HepG2 (cell line): ENCODE measurements at regions of chr13 and their contacts with region 1.

Region 1: GRCh38 chr13:36880961-36881360 is 39.1 kb downstream of the SMAD9 start:
- DNase-seq: no peak
- ATAC-seq: no peak
- H3K4me3 ChIP-seq: no peak overlapping the region
- H3K27ac ChIP-seq: peak overlapping the region; percentile 99
- H3K4me1 ChIP-seq: peaks cover 63% of the 10 kb centered on the region
- H3K27me3 ChIP-seq: no peaks in the 10 kb centered on the region
- CTCF ChIP-seq: no peak
- EP300 ChIP-seq: no peak
- POLR2A ChIP-seq: no peak
- RAD21 ChIP-seq: no peak

Region 2: GRCh38 chr13:36530050-36530789 is 350.7 kb before region 1 on chr13:
- CTCF ChIA-PET with region 1: no interaction called
- POLR2A ChIA-PET with region 1: no interaction called
- in situ Hi-C with region 1: no loop called
- intact Hi-C with region 1: no loop called
- DNase-seq: no peak
- ATAC-seq: no peak
- H3K4me3 ChIP-seq: no peak overlapping the region
- H3K27ac ChIP-seq: no peak overlapping the region
- H3K4me1 ChIP-seq: no peaks in the 10 kb centered on the region
- H3K27me3 ChIP-seq: peaks cover 0 to 1% of the 10 kb centered on the region in 2 experiments; a peak in 1 of 5 replicates
- CTCF ChIP-seq: no peak
- EP300 ChIP-seq: no peak
- POLR2A ChIP-seq: no peak
- RAD21 ChIP-seq: no peak

Region 3: DNA sequence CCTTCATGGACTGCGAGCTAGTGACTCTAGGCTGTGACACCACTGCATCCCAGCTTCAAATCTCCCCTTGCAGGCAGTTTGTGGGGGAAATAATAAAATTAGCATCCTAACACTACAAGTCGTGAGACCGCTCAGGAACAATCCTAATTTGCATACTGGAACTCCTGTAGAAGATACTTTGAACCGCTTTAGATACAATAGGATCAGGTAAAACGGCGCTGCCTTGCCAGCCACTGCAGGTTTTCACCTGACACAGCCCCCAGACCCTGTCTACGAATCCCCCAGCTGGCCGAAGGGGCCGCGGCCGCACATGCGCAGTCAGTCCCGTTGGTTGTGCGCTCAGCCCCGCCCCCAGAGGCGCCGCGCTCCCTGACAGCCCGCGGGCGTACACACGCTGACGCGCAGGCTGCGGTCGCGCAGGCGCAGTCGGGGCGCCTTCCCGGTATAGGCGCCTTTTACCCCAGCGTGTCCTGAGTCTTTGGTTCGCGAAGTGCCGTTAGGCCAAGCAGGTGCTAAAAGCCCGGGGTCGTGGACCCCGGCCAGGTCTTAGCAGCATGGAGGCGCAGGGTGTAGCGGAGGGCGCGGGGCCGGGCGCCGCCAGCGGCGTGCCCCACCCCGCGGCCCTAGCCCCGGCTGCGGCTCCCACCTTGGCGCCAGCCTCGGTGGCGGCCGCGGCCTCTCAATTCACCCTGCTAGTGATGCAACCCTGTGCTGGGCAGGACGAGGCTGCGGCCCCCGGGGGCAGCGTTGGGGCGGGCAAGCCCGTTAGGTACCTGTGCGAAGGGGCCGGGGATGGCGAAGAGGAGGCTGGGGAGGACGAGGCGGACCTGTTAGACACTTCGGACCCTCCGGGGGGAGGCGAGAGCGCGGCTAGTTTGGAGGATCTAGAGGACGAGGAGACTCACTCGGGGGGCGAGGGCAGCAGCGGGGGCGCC is 61.9 kb before region 1 on chr13 and contains the start of gene RFXAP:
- CTCF ChIA-PET with region 1: no interaction called
- POLR2A ChIA-PET with region 1: no interaction called
- in situ Hi-C with region 1: no loop called
- intact Hi-C with region 1: loop called (anchors 2 kb)
- DNase-seq: peak; percentile 74
- ATAC-seq: peak; percentile 93
- H3K4me3 ChIP-seq: peak within 1 kb of the TSS; percentile 71 to 84 (median 77)
- H3K27ac ChIP-seq: peak within 1 kb of the TSS; percentile 63
- H3K4me1 ChIP-seq: peaks cover 46% of the 10 kb centered on the region
- H3K27me3 ChIP-seq: no peaks in the 10 kb centered on the region; a peak in 1 of 5 replicates
- CTCF ChIP-seq: peak; percentile 22; the same call in 1 of the 2 replicates
- EP300 ChIP-seq: no peak
- POLR2A ChIP-seq: peak; percentile 62 to 78
- RAD21 ChIP-seq: peak; percentile 25; the same call in 1 of the 2 replicates
- total RNA-seq, gene RFXAP: 1.8 and 4.4 TPM in 2 replicates

Region 4: GRCh38 chr13:36870050-36870692 is 10.8 kb before region 1 on chr13:
- CTCF ChIA-PET with region 1: no interaction called
- POLR2A ChIA-PET with region 1: interaction called, 24 read pairs
- in situ Hi-C with region 1: no loop called
- intact Hi-C with region 1: no loop called
- DNase-seq: peak; percentile 68
- ATAC-seq: peak; percentile 92
- H3K4me3 ChIP-seq: no peak overlapping the region
- H3K27ac ChIP-seq: peak overlapping the region; percentile 55
- H3K4me1 ChIP-seq: peaks cover 44% of the 10 kb centered on the region
- H3K27me3 ChIP-seq: no peaks in the 10 kb centered on the region
- CTCF ChIP-seq: no peak
- EP300 ChIP-seq: peak in 1 of 2 experiments; percentile 77; a peak in 2 of 4 replicates
- POLR2A ChIP-seq: no peak
- RAD21 ChIP-seq: no peak

Region 5: GRCh38 chr13:36919833-36920615 is 39.1 kb after region 1 on chr13 and contains the start of gene SMAD9:
- CTCF ChIA-PET with region 1: no interaction called
- POLR2A ChIA-PET with region 1: interaction called, 6 read pairs
- in situ Hi-C with region 1: loop called (anchors 5 kb)
- intact Hi-C with region 1: loop called (anchors 1 kb)
- DNase-seq: peak; percentile 50
- ATAC-seq: peak; percentile 77
- H3K4me3 ChIP-seq: peak within 1 kb of the TSS; percentile 69 to 82 (median 80)
- H3K27ac ChIP-seq: peak within 1 kb of the TSS; percentile 70
- H3K4me1 ChIP-seq: peaks cover 60% of the 10 kb centered on the region
- H3K27me3 ChIP-seq: no peaks in the 10 kb centered on the region
- CTCF ChIP-seq: no peak
- EP300 ChIP-seq: no peak
- POLR2A ChIP-seq: 0 out of 4 replicates have a peak, but pooled peaks of 1 of the 2 experiments have one; percentile 19
- RAD21 ChIP-seq: peak; percentile 52
- total RNA-seq, gene SMAD9: 4.2 and 6.3 TPM in 2 replicates

Region 6: GRCh38 chr13:37118016-37118415 is 237.1 kb after region 1 on chr13:
- CTCF ChIA-PET with region 1: no interaction called
- POLR2A ChIA-PET with region 1: no interaction called
- in situ Hi-C with region 1: no loop called
- intact Hi-C with region 1: no loop called
- DNase-seq: no peak
- ATAC-seq: no peak
- H3K4me3 ChIP-seq: no peak overlapping the region
- H3K27ac ChIP-seq: no peak overlapping the region
- H3K4me1 ChIP-seq: no peaks in the 10 kb centered on the region
- H3K27me3 ChIP-seq: no peaks in the 10 kb centered on the region
- CTCF ChIP-seq: no peak
- EP300 ChIP-seq: no peak
- POLR2A ChIP-seq: no peak
- RAD21 ChIP-seq: no peak